ENCODE measurements at regions of chr19 and their contacts with region 1.

Region 1: GRCh38 chr19:38057959-38058710 is 151.1 kb downstream of the SIPA1L3 start:
- DNase-seq: peak; percentile 59
- ATAC-seq: peak; percentile 76
- H3K4me3 ChIP-seq: no peak overlapping the region
- H3K27ac ChIP-seq: peak overlapping the region; percentile 79
- H3K4me1 ChIP-seq: peaks cover 34% of the 10 kb centered on the region
- H3K27me3 ChIP-seq: no peaks in the 10 kb centered on the region
- CTCF ChIP-seq: no peak

Region 2: GRCh38 chr19:37941782-37942515 is 116.2 kb before region 1 on chr19:
- CTCF ChIA-PET with region 1: interaction called, 11 read pairs
- POLR2A ChIA-PET with region 1: no interaction called
- intact Hi-C with region 1: no loop called
- DNase-seq: peak; percentile 74
- ATAC-seq: no peak
- H3K4me3 ChIP-seq: peak overlapping the region; percentile 56
- H3K27ac ChIP-seq: peak overlapping the region; percentile 99
- H3K4me1 ChIP-seq: peaks cover 27% of the 10 kb centered on the region
- H3K27me3 ChIP-seq: no peaks in the 10 kb centered on the region
- CTCF ChIP-seq: no peak

Region 3: DNA sequence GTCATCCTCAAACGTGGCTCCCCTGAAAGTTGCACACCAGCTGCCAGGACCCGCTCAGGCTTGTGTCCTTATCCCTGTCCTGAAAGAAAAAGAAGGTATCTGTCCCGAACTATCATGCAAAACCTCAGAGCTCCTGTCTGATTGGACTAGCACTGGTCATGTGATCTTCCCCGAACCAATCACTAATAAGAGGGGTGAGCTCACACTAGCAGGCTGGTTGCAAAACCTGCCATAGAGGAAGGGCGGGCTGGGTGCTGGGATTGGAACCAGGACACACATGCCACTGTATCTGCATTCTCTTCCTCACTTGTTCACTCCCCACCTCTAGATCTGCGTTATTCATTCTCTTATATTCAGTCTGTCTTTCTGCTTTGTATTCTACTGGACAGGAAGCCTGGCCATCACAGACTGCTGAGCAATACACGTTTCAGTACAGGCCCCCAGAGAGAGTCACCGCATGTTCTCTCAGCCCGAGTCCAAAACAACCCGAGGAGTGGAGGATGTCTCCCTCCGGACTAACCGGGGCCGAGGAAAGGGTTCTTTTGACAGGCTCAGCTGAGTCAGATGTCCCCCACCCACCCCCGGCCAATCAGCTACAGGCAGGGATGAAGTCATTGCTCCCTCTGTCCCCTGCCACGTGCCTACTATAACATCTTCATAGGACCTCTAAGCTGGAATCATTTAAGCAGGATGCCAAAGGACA is 53.5 kb before region 1 on chr19:
- CTCF ChIA-PET with region 1: no interaction called
- POLR2A ChIA-PET with region 1: interaction called, 7 read pairs
- intact Hi-C with region 1: loop called (anchors 5 kb)
- DNase-seq: peak; percentile 72
- ATAC-seq: peak; percentile 28
- H3K4me3 ChIP-seq: no peak overlapping the region; the same call in 1 of the 2 replicates
- H3K27ac ChIP-seq: peak overlapping the region; percentile 100
- H3K4me1 ChIP-seq: peaks cover 35% of the 10 kb centered on the region
- H3K27me3 ChIP-seq: no peaks in the 10 kb centered on the region
- CTCF ChIP-seq: no peak

Region 4: DNA sequence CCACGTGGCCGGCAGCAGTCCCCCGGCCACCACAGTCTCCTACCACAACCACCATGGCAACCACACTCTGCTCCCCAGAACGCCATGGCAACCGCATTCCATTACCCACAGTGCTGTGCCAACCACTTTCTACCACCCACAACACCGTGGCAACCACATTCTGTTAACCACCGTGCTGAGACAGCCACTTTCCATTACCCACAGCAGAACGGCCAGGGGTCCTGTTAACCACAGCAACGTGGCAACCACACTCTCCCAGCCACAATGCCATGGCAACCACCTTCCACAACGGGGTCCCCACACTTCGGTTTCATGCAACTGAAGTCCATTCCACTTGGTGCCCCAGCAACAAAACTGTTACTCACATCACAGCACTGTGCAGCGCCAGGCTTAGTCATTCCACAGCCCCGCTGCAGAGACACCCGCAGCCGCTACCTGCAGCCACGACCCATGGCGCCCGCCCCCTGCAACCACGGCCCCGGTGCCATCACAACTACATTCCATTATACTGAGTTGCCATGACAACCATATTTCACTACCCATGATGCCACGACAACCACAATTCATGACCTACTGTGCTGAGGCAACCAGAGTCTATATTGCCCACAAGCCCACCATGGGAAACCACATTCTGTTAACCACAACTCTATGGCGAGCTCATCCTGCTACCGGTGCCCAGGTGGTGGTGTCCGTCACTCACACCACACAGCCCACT is 155.9 kb after region 1 on chr19:
- CTCF ChIA-PET with region 1: no interaction called
- POLR2A ChIA-PET with region 1: no interaction called
- intact Hi-C with region 1: no loop called
- DNase-seq: peak; percentile 18
- ATAC-seq: no peak; the same call in 1 of the 2 replicates
- H3K4me3 ChIP-seq: no peak overlapping the region
- H3K27ac ChIP-seq: no peak overlapping the region
- H3K4me1 ChIP-seq: no peaks in the 10 kb centered on the region
- H3K27me3 ChIP-seq: no peaks in the 10 kb centered on the region
- CTCF ChIP-seq: no peak

Measured in PC-3 (cell line).